ENCODE measurements at regions of chrX and their contacts with region 1.

Region 1: GRCh38 chrX:53556868-53557267 is 122.7 kb upstream of the HSD17B10 start:
- DNase-seq: no peak
- H3K4me3 ChIP-seq: no peak overlapping the region
- H3K4me3 Mint-ChIP-seq: no peak overlapping the region
- H3K27ac Mint-ChIP-seq: no peak overlapping the region
- H3K4me1 ChIP-seq: peaks cover 27% of the 10 kb centered on the region
- H3K4me1 Mint-ChIP-seq: peaks cover 23% of the 10 kb centered on the region
- H3K27me3 ChIP-seq: no peaks in the 10 kb centered on the region; the same call in 1 of the 2 replicates
- H3K27me3 Mint-ChIP-seq: no peaks in the 10 kb centered on the region
- CTCF ChIP-seq: no peak

Region 2: DNA sequence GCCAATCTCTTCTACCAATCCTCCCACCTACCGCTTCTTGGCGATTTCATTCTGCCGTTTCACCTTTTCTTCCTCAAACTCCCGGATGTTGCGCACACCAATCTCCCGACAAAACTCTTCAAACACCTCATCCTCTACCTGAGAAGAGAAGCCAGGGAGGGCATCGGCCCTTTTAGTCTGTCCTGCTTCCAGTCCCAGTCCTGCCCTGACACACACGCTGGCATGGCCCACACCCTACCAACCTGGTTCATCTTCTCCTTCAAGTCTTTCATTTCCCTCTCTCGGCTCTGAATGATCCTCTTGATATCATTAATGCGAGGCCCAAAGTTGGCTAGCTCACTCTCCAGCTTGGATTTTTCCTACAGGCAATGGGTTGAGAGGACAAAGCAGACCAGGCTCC is 153.3 kb before region 1 on chrX:
- CTCF ChIA-PET with region 1: no interaction called
- POLR2A ChIA-PET with region 1: no interaction called
- intact Hi-C with region 1: no loop called
- DNase-seq: no peak
- H3K4me3 ChIP-seq: no peak overlapping the region
- H3K4me3 Mint-ChIP-seq: no peak overlapping the region
- H3K27ac Mint-ChIP-seq: peak overlapping the region; percentile 18
- H3K4me1 ChIP-seq: no peaks in the 10 kb centered on the region
- H3K4me1 Mint-ChIP-seq: no peaks in the 10 kb centered on the region
- H3K27me3 ChIP-seq: no peaks in the 10 kb centered on the region
- H3K27me3 Mint-ChIP-seq: no peaks in the 10 kb centered on the region
- CTCF ChIP-seq: no peak

Region 3: DNA sequence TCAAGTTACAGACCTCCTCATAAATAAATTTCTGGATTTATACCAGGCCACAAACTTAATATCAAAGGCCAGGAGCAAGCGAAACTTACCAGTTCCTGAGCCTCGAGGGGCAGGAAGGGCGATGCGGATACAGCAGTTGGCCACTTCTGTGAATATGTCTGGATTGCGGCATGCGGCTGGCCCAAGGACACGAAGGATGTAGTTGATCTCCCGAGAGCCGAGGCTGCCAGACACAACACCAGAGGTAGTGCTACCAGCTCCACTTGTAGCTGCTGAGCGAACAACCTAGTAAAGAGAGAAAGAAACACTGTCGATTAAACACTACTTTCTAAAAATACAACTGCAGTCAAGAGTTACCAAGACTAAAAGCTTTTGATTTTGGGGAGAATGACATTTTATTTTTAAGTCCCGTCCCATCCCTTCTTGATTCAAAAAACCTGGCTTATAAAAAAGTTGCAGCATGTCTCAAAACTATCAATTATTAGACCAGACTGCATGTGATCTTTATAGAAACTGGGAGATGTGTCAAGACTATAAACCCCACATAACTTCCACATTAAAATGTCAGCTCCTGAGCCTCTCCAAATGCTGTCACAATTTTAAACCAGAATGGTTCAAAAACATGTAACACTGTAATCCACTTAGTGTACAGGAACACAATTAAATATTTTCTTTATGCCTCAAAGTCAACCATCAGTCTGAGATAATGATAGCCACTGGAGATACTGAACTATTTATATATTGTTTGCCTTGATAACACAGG is 24.1 kb after region 1 on chrX:
- CTCF ChIA-PET with region 1: no interaction called
- POLR2A ChIA-PET with region 1: no interaction called
- intact Hi-C with region 1: loop called (anchors 2 kb)
- DNase-seq: no peak
- H3K4me3 ChIP-seq: no peak overlapping the region
- H3K4me3 Mint-ChIP-seq: no peak overlapping the region
- H3K27ac Mint-ChIP-seq: no peak overlapping the region
- H3K4me1 ChIP-seq: no peaks in the 10 kb centered on the region
- H3K4me1 Mint-ChIP-seq: no peaks in the 10 kb centered on the region
- H3K27me3 ChIP-seq: no peaks in the 10 kb centered on the region
- H3K27me3 Mint-ChIP-seq: no peaks in the 10 kb centered on the region
- CTCF ChIP-seq: no peak

Measured in Caco-2 (cell line).